Posterior vena cava (tissue), 2 donors: ENCODE measurements at regions of chr6 and their contacts with region 1.

Region 1: GRCh38 chr6:110270165-110270564 is 88.0 kb downstream of the METTL24 start:
- DNase-seq: no peak

Region 2: GRCh38 chr6:110315869-110316398 is 45.8 kb after region 1 on chr6:
- intact Hi-C with region 1: loop called in 1 of 2 experiments (anchors 1 kb)
- DNase-seq: no peak